Heart right ventricle (tissue), 16 donors: ENCODE measurements at regions of chr9 and their contacts with region 1.

Region 1: GRCh38 chr9:109052416-109052815 is 39.1 kb upstream of the CTNNAL1 start:
- DNase-seq: no peak
- ATAC-seq: no peak
- H3K4me3 ChIP-seq: no peak overlapping the region
- H3K27ac ChIP-seq: no peak overlapping the region
- H3K4me1 ChIP-seq: peaks cover 0 to 15% (median 5%) of the 10 kb centered on the region in 9 donors
- H3K27me3 ChIP-seq: no peaks in the 10 kb centered on the region
- CTCF ChIP-seq: no peak

Region 2: GRCh38 chr9:108924466-108924865 is 128.0 kb before region 1 on chr9:
- intact Hi-C with region 1: loop called in 1 of 10 experiments (anchors 10 kb)
- DNase-seq: no peak
- ATAC-seq: no peak
- H3K4me3 ChIP-seq: no peak overlapping the region
- H3K27ac ChIP-seq: no peak overlapping the region
- H3K4me1 ChIP-seq: no peaks in the 10 kb centered on the region
- H3K27me3 ChIP-seq: no peaks in the 10 kb centered on the region
- CTCF ChIP-seq: no peak

Region 3: DNA sequence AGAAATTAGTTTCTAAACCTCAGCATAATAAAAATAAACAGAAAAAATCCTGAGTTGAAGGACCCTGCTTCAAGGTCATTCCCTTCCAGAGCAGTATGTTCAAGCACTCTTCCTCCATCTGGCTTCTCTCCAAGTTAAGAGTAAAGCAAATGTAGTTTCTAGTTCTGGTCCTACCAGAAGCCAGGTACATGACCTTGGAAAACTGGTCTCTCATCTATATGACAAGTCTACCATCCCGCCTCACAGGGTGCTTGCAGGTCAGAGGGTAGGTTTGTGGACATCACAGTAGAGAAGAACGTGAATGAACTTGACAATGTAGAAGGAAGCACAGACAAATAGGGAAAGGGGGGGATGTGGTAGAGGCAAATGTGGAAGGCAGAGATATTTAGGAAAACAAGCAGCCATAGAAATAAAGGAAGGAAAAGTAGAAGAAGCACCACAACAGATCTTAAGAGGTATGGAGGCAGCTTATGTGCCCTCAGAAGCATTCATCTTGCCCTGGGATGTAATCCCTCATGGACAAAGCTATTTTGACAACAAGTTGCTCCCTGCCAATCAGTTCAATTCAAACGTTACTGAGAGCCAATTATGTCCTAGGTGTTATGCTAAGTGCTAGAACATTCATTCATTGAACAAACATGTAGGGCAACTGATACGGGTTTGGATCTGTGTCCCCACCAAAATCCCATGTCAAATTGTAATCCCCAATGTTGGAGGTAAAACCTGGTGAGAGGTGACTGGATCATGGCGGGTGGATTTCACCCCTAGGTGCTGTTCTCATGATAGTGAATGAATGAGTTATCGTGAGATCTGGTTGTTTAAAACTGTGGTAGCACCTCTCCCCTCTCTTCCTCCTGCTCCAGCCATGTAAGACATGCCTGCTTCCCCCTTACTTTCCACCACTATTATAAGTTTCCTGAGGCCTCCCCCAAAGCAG is 15.4 kb before region 1 on chr9:
- intact Hi-C with region 1: no loop called
- DNase-seq: no peak
- ATAC-seq: peak in 5 of 8 donors; percentile 28 to 49 (median 39)
- H3K4me3 ChIP-seq: no peak overlapping the region
- H3K27ac ChIP-seq: peak overlapping the region in 9 of 10 donors; percentile 22 to 72 (median 55)
- H3K4me1 ChIP-seq: peaks cover 0 to 26% (median 17%) of the 10 kb centered on the region in 9 donors
- H3K27me3 ChIP-seq: no peaks in the 10 kb centered on the region
- CTCF ChIP-seq: no peak

Region 4: GRCh38 chr9:109092051-109092580 is 39.7 kb after region 1 on chr9:
- intact Hi-C with region 1: loop called in 1 of 10 experiments (anchors 2 kb)
- DNase-seq: no peak
- ATAC-seq: no peak
- H3K4me3 ChIP-seq: no peak overlapping the region
- H3K27ac ChIP-seq: peak overlapping the region in 3 of 10 donors; percentile 8 to 91 (median 47)
- H3K4me1 ChIP-seq: peaks cover 0 to 54% (median 31%) of the 10 kb centered on the region in 9 donors
- H3K27me3 ChIP-seq: no peaks in the 10 kb centered on the region
- CTCF ChIP-seq: no peak

Region 5: DNA sequence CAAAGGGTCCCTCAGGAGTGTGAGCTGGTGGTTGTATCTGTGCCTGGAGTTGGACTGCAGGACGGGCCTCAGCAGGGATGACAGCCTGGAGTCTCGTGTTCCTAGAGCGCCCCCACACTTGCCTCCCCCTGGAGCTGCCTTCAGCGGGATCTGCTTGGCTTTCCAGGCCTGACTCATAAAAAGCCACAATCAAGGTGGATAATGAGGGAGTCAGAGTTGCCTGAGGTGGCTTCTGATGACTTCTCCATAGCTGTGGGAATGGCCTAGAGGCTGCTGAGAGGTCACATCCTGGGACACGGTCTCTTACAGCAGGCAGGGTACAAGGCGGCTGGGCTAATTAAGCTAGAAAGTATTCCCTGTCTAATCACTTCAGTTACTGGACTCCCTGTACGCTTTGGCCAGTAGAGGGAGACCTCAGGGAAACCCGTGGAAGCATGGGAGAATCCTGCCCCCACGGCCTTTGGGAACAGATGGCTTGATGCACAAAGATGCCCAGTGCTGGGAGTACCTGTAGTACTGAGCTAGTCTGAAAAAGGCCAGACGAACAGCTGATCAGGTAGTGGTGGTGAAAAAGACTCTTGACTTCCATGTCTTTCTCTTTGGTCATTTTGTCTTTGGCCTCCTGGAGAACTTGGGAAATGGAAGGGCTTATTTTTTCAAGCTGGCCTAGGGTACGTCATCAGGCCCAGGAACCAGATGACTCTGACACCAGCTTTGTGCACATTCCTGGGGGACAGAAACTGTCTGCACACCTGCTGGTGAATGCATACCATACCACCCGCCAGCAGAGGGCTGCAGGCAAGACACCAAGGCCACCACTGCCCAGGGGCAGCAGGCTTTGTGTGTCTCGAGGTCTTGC is 130.8 kb after region 1 on chr9:
- intact Hi-C with region 1: no loop called
- DNase-seq: no peak
- ATAC-seq: peak in 2 of 8 donors; percentile 21 to 54
- H3K4me3 ChIP-seq: no peak overlapping the region
- H3K27ac ChIP-seq: no peak overlapping the region
- H3K4me1 ChIP-seq: peaks cover 0 to 15% (median 0%) of the 10 kb centered on the region in 9 donors
- H3K27me3 ChIP-seq: peaks cover 0 to 7% (median 0%) of the 10 kb centered on the region in 7 donors
- CTCF ChIP-seq: peak in 6 of 9 donors; percentile 20 to 43 (median 32)

Region 6: DNA sequence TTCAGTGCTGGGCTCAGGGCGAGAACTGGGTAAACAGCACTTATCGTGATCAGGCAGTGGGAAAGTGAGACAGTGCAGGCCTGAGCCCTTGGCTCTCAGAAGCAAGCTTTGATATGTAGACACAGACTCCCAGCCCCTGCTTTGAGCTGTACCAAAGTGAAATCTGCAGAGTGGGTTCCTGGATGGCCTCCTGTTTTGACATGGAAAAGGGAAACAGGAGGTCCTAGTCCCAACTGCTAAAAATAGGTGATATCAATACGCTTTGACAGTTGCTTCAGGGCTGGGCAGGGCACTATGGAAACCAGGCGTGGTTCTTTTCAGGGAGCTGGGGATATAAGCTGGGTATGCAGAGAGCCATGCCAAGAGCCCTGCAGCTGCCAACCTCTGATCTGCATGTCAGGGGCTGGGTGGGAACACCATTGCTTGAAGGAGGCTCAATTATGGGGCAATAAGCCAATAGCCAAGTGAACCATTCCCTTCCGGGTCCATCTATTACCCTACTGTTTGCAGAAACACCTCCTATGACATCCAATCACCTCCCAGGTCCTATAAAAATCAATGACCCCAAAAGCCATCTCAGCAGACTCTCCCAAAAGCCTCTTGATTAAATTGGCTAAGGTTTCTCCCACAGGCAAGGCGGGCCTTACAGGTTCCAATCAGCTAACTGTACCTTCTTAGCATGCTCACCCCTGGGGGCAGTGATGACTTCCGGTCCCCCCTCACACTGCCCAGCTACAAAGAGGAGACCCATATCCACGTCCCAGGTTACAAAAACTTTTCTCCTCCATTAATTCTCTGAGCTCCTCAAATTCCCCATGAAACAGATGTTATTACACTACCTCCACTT is 222.7 kb after region 1 on chr9:
- intact Hi-C with region 1: no loop called
- DNase-seq: peak in 1 of 2 donors; percentile 38
- ATAC-seq: peak in 6 of 8 donors; percentile 17 to 63 (median 41)
- H3K4me3 ChIP-seq: no peak overlapping the region
- H3K27ac ChIP-seq: peak overlapping the region in 4 of 10 donors; percentile 28 to 41 (median 32)
- H3K4me1 ChIP-seq: peaks cover 0 to 35% (median 4%) of the 10 kb centered on the region in 9 donors
- H3K27me3 ChIP-seq: no peaks in the 10 kb centered on the region
- CTCF ChIP-seq: no peak